ENCODE measurements at regions of chr6 and their contacts with region 1.

Region 1: DNA sequence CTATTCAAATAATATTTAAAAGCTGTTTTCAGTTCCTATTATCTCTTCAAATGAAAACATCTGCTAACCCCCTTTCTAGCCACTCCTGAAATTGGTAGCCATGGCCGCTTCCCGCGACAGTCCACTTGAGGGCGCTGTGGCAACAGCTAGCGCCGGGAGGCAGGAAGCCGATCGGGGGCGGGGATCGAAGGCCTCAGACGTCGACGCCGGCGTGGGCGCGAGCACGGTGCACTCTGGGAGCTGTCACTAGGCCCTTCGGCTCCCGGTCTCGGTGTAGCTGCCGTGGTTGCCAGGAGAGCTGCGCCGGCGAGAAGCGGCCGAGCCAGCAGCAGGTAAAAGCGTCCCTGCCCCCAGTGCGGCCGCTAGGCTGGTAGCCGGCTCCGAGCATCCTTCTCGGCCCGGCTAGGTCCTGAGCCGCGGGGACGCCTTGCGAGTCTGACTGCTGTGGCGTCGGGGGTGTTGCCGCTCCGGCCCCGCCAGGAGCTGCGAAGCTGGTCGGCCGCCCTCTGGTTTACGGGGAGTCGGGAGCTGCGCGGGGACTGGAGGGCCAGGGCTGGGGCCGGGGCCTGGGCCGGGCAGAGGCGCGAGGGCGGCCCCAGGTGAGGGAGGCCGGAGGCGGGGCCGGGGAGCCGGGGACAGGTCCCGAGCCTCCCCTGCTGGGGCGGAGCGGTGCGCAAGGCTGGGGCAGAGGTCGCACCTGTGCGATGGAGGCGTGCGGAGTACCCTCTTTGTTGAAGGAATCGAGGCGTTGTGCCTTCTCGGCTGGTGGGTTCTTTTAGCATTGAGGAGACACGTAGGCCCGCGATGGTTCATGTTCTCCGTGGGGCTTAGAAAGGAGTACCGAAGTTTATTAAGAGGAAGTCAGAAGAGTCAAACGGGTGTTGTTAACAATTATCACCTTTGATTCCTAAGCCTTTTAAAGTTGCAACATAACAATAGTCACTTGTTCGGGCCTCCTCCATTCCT is at the start of gene DOP1A:
- DNase-seq: peak; percentile 90 to 93 (median 92)
- H3K4me3 ChIP-seq: peak within 1 kb of the TSS; percentile 62 to 88 (median 72)
- H3K4me3 Mint-ChIP-seq: peak within 1 kb of the TSS; percentile 88 to 95
- H3K27ac ChIP-seq: peak within 1 kb of the TSS; percentile 69 to 83
- H3K27ac Mint-ChIP-seq: peak within 1 kb of the TSS; percentile 82 to 94 (median 90)
- H3K4me1 ChIP-seq: peaks cover 40 to 52% of the 10 kb centered on the region in 2 donors
- H3K4me1 Mint-ChIP-seq: peaks cover 38% of the 10 kb centered on the region
- H3K27me3 ChIP-seq: no peaks in the 10 kb centered on the region
- H3K27me3 Mint-ChIP-seq: peaks cover 0 to 2% (median 0%) of the 10 kb centered on the region in 3 donors
- CTCF ChIP-seq: peak; percentile 96
- polyA plus RNA-seq, gene DOP1A: 2.1 to 8.9 (median 2.5) TPM

Region 2: GRCh38 chr6:82247634-82248232 is 820.0 kb before region 1 on chr6 and contains the start of gene IBTK:
- intact Hi-C with region 1: loop called (anchors 5 kb)
- DNase-seq: peak; percentile 93 to 97 (median 95)
- H3K4me3 ChIP-seq: peak within 1 kb of the TSS; percentile 74 to 89 (median 79)
- H3K4me3 Mint-ChIP-seq: peak within 1 kb of the TSS; percentile 96 to 99
- H3K27ac ChIP-seq: peak within 1 kb of the TSS; percentile 84 to 92
- H3K27ac Mint-ChIP-seq: peak within 1 kb of the TSS; percentile 93 to 98 (median 97)
- H3K4me1 ChIP-seq: peaks cover 16 to 24% of the 10 kb centered on the region in 2 donors
- H3K4me1 Mint-ChIP-seq: peaks cover 31% of the 10 kb centered on the region
- H3K27me3 ChIP-seq: no peaks in the 10 kb centered on the region
- H3K27me3 Mint-ChIP-seq: peaks cover 0 to 2% (median 1%) of the 10 kb centered on the region in 3 donors
- CTCF ChIP-seq: no peak
- polyA plus RNA-seq, gene IBTK: 7.0 to 20.2 (median 13.1) TPM

Region 3: GRCh38 chr6:82679232-82679631 is 388.5 kb before region 1 on chr6:
- intact Hi-C with region 1: no loop called
- DNase-seq: no peak
- H3K4me3 ChIP-seq: no peak overlapping the region
- H3K4me3 Mint-ChIP-seq: no peak overlapping the region
- H3K27ac ChIP-seq: no peak overlapping the region
- H3K27ac Mint-ChIP-seq: no peak overlapping the region
- H3K4me1 ChIP-seq: no peaks in the 10 kb centered on the region
- H3K4me1 Mint-ChIP-seq: no peaks in the 10 kb centered on the region
- H3K27me3 ChIP-seq: no peaks in the 10 kb centered on the region
- H3K27me3 Mint-ChIP-seq: no peaks in the 10 kb centered on the region
- CTCF ChIP-seq: no peak

Region 4: GRCh38 chr6:83192871-83193746 is 125.4 kb after region 1 on chr6 and contains the starts of genes PGM3 and RWDD2A:
- intact Hi-C with region 1: loop called (anchors 5 kb)
- DNase-seq: peak; percentile 77 to 88 (median 85)
- H3K4me3 ChIP-seq: peak within 1 kb of the TSS; percentile 70 to 90 (median 70)
- H3K4me3 Mint-ChIP-seq: peak within 1 kb of the TSS; percentile 97 to 100
- H3K27ac ChIP-seq: peak within 1 kb of the TSS in 1 of 2 donors; percentile 75
- H3K27ac Mint-ChIP-seq: peak within 1 kb of the TSS; percentile 83 to 97 (median 91)
- H3K4me1 ChIP-seq: peaks cover 14 to 21% of the 10 kb centered on the region in 2 donors
- H3K4me1 Mint-ChIP-seq: peaks cover 19% of the 10 kb centered on the region
- H3K27me3 ChIP-seq: peaks cover 0 to 7% of the 10 kb centered on the region in 2 donors
- H3K27me3 Mint-ChIP-seq: peaks cover 0 to 8% (median 7%) of the 10 kb centered on the region in 3 donors
- CTCF ChIP-seq: no peak
- polyA plus RNA-seq, gene PGM3: 4.0 to 4.8 (median 4.6) TPM
- polyA plus RNA-seq, gene RWDD2A: 0.77 to 1.2 (median 1.1) TPM

Region 5: GRCh38 chr6:83859410-83860358 is 792.0 kb after region 1 on chr6 and contains the start of gene CYB5R4:
- intact Hi-C with region 1: loop called in 1 of 2 experiments (anchors 10 kb)
- DNase-seq: peak; percentile 91 to 93 (median 93)
- H3K4me3 ChIP-seq: peak within 1 kb of the TSS; percentile 93 to 98 (median 94)
- H3K4me3 Mint-ChIP-seq: peak within 1 kb of the TSS; percentile 95 to 100
- H3K27ac ChIP-seq: peak within 1 kb of the TSS; percentile 88 to 89
- H3K27ac Mint-ChIP-seq: peak within 1 kb of the TSS; percentile 94 to 98 (median 97)
- H3K4me1 ChIP-seq: peaks cover 18 to 23% of the 10 kb centered on the region in 2 donors
- H3K4me1 Mint-ChIP-seq: peaks cover 23% of the 10 kb centered on the region
- H3K27me3 ChIP-seq: peaks cover 25 to 38% of the 10 kb centered on the region in 2 donors
- H3K27me3 Mint-ChIP-seq: peaks cover 14 to 20% (median 17%) of the 10 kb centered on the region in 3 donors
- CTCF ChIP-seq: no peak
- polyA plus RNA-seq, gene CYB5R4: 30.5 to 120 (median 116) TPM

Region 6: GRCh38 chr6:84227434-84228197 is 1159.9 kb after region 1 on chr6 and contains the start of gene CEP162:
- intact Hi-C with region 1: loop called (anchors 5 to 10 kb)
- DNase-seq: peak; percentile 73 to 84 (median 81)
- H3K4me3 ChIP-seq: peak within 1 kb of the TSS; percentile 90 to 97 (median 95)
- H3K4me3 Mint-ChIP-seq: peak within 1 kb of the TSS; percentile 89 to 99
- H3K27ac ChIP-seq: peak within 1 kb of the TSS; percentile 45 to 89
- H3K27ac Mint-ChIP-seq: peak within 1 kb of the TSS; percentile 89 to 98 (median 94)
- H3K4me1 ChIP-seq: peaks cover 11 to 15% of the 10 kb centered on the region in 2 donors
- H3K4me1 Mint-ChIP-seq: peaks cover 31% of the 10 kb centered on the region
- H3K27me3 ChIP-seq: peaks cover 5 to 36% of the 10 kb centered on the region in 2 donors
- H3K27me3 Mint-ChIP-seq: peaks cover 14 to 16% (median 15%) of the 10 kb centered on the region in 3 donors
- CTCF ChIP-seq: peak; percentile 90
- polyA plus RNA-seq, gene CEP162: 1.5 to 2.7 (median 1.6) TPM